Calu3 (cell line): ENCODE measurements at regions of chr5 and their contacts with region 1.

Region 1: GRCh38 chr5:39437469-39437868 is 12.7 kb upstream of the DAB2 start:
- DNase-seq: no peak
- H3K4me3 Mint-ChIP-seq: no peak overlapping the region
- H3K27ac Mint-ChIP-seq: no peak overlapping the region
- H3K4me1 Mint-ChIP-seq: peaks cover 40% of the 10 kb centered on the region
- H3K27me3 Mint-ChIP-seq: no peaks in the 10 kb centered on the region
- CTCF ChIP-seq: no peak

Region 2: DNA sequence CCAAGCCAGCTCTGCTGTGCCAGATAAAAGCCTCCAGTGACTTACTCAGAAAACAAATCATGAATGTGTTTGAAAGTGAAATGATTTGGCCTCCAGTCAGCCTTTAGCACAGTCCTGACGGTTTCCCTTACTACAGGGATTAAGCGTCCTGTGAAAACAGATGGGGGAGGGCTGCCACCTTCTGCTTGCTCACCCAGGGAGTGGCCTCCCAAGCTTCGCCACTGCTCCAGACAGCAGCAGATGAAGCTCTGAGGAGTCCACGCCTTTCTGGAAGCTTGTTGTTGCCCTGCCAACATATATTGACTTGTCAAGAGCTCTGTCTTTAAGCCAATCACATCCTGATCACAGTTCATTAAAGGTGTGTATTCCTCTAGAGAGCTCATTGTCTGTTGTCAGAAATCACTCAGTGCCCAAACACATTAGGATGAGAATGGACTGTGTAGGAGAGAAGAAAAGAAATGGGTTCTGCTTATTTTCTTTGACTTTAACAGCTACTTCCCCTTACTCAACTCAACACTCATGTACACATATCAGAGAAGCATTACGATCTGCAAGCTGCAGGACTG is 213.2 kb before region 1 on chr5:
- CTCF ChIA-PET with region 1: no interaction called
- intact Hi-C with region 1: no loop called
- DNase-seq: peak; percentile 69
- H3K4me3 Mint-ChIP-seq: peak overlapping the region; percentile 12
- H3K27ac Mint-ChIP-seq: peak overlapping the region; percentile 19
- H3K4me1 Mint-ChIP-seq: peaks cover 36% of the 10 kb centered on the region
- H3K27me3 Mint-ChIP-seq: no peaks in the 10 kb centered on the region
- CTCF ChIP-seq: no peak

Region 3: DNA sequence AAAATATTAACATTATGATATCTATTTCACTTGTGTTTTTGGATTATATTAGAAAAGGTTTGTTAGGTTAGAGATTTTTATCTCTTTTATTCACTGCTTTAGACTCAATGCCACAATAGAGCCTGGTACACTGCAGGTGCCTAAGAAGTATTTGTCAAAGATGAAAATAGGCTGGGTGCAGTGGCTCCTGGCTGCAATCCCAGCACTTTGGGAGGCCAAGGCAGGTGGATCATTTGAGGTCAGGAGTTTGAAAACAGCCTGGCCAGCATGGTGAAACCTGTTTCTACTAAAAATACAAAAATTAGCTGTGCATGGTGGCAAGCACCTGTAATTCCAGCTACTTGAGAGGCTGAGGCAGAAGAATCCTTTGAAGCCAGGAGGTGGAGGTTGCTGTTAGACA is 137.5 kb before region 1 on chr5:
- CTCF ChIA-PET with region 1: no interaction called
- intact Hi-C with region 1: loop called (anchors 10 kb)
- DNase-seq: no peak
- H3K4me3 Mint-ChIP-seq: no peak overlapping the region
- H3K27ac Mint-ChIP-seq: no peak overlapping the region
- H3K4me1 Mint-ChIP-seq: no peaks in the 10 kb centered on the region
- H3K27me3 Mint-ChIP-seq: no peaks in the 10 kb centered on the region
- CTCF ChIP-seq: no peak